Activated naive CD4-positive, alpha-beta T cell treated with anti-CD3 and anti-CD28 coated beads for 36 hours (primary cell): ENCODE measurements at regions of chr17 and their contacts with region 1.

Region 1: DNA sequence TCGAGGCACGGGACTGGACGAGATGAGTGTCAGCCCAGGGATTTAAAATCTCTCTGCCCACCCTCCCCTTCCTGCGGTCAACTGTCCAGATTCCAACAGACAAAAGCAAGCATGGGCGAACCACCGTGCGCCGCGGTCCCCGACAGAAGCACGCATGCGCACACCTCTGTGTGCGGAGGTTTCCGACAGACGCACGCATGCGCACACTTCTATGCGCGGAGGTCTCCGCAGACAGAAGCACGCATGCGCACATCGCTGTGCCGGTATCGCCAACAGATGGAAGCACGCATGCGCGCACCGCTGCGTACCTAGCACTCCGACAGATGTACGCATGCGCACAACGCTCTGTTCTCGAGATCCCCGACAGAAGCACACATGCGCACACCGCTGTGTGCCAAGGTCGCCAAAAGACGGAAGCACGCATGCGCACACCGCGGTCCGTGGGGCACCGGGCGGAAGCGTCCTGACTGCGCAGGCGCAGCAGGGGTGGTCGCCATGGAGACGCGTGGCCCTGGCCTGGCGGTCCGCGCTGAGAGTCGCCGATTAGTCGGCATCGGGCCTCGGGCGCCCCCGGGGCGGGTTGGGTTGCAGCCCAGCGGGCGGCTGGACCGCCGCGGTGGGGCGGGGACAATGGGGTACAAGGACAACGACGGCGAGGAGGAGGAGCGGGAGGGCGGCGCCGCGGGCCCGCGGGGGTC is 57.4 kb upstream of the RPH3AL start:
- DNase-seq: peak; percentile 100
- H3K4me3 Mint-ChIP-seq: peak overlapping the region; percentile 76
- H3K27ac Mint-ChIP-seq: peak overlapping the region; percentile 89
- H3K4me1 Mint-ChIP-seq: peaks cover 66% of the 10 kb centered on the region
- H3K27me3 Mint-ChIP-seq: peaks cover 3% of the 10 kb centered on the region

Region 2: GRCh38 chr17:350706-351448 is 59.1 kb before region 1 on chr17:
- CTCF ChIA-PET with region 1: no interaction called
- intact Hi-C with region 1: no loop called
- DNase-seq: no peak
- H3K4me3 Mint-ChIP-seq: no peak overlapping the region
- H3K27ac Mint-ChIP-seq: no peak overlapping the region
- H3K4me1 Mint-ChIP-seq: no peaks in the 10 kb centered on the region
- H3K27me3 Mint-ChIP-seq: no peaks in the 10 kb centered on the region

Region 3: DNA sequence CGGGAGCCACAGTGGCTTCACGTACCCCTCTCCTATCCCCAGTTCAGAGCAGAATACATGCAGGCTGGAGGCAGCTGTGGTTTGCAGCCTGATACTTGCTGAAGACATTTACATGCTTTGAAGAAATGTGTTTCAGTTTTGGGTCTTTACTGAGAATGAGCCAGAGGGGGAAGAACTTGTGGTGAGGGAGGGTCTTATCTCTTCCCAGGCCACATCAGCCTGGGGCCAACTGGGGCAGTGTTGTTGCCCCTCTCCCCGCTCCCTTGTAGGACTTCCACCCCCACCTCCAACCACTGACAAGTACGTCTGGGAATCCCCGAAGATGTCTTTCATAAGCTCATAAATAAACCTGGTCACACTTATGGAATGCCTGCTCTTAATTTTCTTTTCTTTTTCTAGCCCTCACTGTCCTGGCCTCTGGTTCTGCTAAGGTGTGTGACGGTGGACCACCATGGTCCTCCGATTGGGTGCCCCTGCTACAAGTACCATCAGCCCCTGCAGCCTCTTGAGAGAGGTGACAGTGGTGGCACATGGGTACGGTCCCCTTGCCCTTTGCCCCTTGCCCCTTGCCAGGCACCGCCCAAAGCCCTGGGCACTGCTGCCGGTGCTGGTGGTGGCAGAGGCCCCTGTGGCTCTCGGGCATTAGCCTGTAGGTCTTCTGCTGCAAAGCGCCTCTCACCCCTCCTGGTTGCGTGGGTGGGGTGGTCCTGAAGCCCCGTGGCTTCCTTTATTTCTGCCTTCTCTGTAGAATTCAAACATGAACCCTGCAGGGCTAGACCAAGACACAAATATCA is 87.4 kb after region 1 on chr17:
- CTCF ChIA-PET with region 1: interaction called, 19 read pairs
- intact Hi-C with region 1: no loop called
- DNase-seq: peak; percentile 23
- H3K4me3 Mint-ChIP-seq: no peak overlapping the region
- H3K27ac Mint-ChIP-seq: no peak overlapping the region
- H3K4me1 Mint-ChIP-seq: peaks cover 35% of the 10 kb centered on the region
- H3K27me3 Mint-ChIP-seq: no peaks in the 10 kb centered on the region

Region 4: DNA sequence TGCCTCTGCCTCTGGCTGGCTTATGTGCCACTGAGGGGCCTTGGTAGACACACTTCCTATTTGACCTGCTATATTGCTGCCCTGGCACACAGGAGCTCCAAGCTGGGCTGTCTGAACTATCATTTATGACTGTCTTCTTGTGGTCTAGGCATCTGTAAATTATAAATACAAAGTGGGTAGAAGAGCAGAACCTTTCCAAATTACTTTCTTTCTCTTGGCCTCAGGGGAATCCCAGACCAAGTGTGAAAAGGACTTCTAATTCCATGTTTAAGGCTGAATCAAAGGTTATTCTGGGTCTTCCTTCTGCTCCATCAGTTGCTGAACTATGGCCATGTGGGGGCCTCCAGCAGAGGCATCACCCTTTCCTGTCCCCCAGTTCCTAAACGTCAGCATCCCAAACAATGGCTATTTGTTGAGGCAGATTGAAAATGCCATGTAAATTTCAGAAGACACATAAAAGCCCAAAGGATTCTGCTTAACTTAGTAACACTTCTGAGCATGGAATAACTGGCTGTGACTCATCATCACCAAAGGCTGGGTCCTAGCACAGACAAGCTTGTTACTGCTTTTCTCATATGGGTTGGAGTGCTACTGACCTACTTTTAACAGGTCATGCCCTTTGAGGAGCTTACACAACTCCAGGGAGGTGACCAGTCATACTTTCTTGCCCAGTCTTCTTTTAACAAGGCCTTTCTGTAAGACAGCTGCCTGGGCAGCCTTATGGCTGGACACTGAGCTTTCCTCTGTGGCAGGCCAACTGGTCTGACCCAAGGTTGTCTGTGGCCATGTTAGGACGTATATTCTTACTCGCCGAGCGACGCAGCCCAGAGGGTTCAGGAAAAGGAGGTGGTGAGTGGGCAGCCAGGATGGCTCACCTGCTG is 149.8 kb after region 1 on chr17:
- CTCF ChIA-PET with region 1: interaction called, 8 read pairs
- intact Hi-C with region 1: loop called (anchors 5 kb)
- DNase-seq: no peak
- H3K4me3 Mint-ChIP-seq: no peak overlapping the region
- H3K27ac Mint-ChIP-seq: no peak overlapping the region
- H3K4me1 Mint-ChIP-seq: peaks cover 6% of the 10 kb centered on the region
- H3K27me3 Mint-ChIP-seq: no peaks in the 10 kb centered on the region

Region 5: DNA sequence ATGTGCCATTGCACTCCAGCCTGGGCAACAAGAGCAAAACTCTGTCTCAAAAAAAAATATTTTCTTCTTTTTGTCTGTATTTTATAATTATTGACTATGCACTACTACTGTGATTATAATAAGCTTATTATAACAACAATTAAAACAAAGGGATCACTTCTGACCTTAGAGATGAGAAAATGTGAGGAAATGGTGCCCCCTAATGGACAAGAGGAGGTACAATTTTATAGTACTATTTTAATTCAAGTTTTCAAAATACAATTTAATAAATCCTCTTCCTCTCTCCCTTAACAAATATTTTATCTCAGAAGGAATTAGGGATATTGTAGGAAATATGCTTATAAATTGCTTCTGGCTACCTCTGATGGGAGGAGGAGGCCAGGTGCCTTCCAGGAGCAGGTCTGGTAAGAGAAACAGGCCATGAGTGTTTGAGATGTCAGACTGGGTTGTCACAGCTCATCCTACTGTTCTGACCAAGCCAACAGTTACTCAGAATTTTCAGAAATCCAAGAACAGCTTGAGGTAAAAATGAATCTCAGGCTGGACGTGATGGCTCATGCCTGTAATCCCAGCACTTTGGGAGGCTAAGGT is 290.6 kb after region 1 on chr17:
- CTCF ChIA-PET with region 1: interaction called, 124 read pairs
- intact Hi-C with region 1: loop called (anchors 1 kb)
- DNase-seq: no peak
- H3K4me3 Mint-ChIP-seq: no peak overlapping the region
- H3K27ac Mint-ChIP-seq: no peak overlapping the region
- H3K4me1 Mint-ChIP-seq: peaks cover 2% of the 10 kb centered on the region
- H3K27me3 Mint-ChIP-seq: no peaks in the 10 kb centered on the region

Region 6: DNA sequence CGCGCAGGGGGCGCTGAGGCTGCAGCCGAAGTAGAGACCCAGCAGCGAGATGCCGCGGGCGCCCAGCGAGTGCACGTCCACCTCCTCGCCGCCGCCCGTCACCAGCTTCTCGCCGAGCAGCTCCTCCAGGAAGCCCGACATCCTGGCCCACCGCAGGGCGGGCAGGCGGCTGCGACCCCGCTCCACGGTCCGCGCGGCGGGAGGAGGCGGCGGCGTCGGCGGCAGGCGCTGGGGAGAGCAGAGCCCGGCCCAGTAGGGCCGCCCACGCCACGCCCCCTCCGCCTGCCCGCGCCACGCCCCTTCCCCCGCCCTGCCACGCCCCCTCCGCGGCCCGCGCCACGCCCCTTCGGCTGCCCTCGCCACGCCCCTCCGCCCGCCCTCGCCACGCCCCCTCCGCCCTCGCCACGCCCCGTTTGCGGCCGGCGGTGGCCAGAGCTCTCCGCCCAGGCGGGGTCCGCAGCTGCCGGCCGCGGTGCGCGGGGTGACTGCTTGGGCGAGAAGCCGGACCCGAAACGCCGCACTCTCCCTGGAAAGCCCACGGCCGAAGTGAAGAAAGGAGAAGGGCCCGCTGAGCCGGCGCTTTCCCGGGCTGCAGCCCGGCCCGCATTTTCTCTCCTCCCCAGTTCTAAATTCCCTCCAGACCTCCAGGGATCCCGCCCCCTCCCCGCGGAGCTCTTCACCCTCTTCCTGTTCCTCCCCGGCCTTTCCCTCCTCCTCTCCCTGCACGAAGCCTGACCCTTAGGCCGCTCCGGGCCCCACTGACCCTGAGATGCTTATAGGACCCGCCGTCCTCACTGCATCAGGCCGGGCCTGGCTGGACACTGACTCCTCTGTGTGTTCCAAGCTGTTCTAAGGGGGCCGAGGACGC is 569.8 kb after region 1 on chr17 and contains the start of gene NXN:
- CTCF ChIA-PET with region 1: interaction called, 3 read pairs
- intact Hi-C with region 1: loop called (anchors 2 kb)
- DNase-seq: peak; percentile 86
- H3K4me3 Mint-ChIP-seq: peak within 1 kb of the TSS; percentile 66
- H3K27ac Mint-ChIP-seq: no peak within 1 kb of the TSS
- H3K4me1 Mint-ChIP-seq: peaks cover 19% of the 10 kb centered on the region
- H3K27me3 Mint-ChIP-seq: peaks cover 33% of the 10 kb centered on the region
- total RNA-seq, gene NXN: 0.20 to 0.33 TPM